Activated naive CD4-positive, alpha-beta T cell treated with anti-CD3 and anti-CD28 coated beads, Interleukin-2, amount 10 ng/mL, durations not matched to agents 7 days and 5 days (primary cell): ENCODE measurements at regions of chr9 and their contacts with region 1.

Region 1: GRCh38 chr9:127916665-127917613 is at the start of gene ST6GALNAC4:
- DNase-seq: peak; percentile 97
- H3K4me3 Mint-ChIP-seq: peak within 1 kb of the TSS; percentile 73
- H3K27ac Mint-ChIP-seq: peak within 1 kb of the TSS; percentile 88
- H3K4me1 Mint-ChIP-seq: peaks cover 77% of the 10 kb centered on the region
- H3K27me3 Mint-ChIP-seq: peaks cover 13% of the 10 kb centered on the region

Region 2: DNA sequence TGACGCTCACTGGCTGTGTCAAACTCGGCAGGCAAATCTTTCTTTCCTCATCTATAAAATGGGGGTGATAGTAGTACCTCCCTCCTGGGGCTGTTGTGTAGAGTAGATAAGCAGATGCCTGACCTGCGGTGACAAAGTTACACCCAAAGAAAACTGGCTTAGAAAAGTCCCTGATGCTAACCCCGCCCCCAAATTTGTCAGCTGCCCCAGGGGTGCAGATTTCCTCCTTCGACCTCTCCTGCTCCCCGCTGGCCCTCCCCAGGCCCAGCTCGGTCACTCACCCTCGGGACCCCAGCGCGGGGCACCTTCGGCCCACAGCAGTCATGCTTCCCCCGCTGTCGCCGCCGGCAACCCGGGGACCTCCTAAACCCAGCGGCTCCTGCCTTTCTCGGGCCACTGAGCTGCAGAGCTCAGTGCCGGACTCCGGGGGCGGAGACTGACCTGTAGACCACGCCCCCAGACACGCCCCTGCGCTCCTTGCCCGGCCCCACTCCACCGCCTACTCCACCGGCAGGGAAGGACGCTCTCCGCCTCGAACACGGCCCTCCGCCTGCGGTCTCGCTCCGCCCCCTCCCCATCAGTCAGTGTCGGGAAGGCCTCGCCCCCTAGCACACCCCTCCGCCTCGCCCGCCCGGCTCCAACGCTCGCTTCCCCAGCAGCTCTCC is 145.9 kb before region 1 on chr9:
- CTCF ChIA-PET with region 1: interaction called, 11 read pairs
- DNase-seq: peak; percentile 99
- H3K4me3 Mint-ChIP-seq: peak overlapping the region; percentile 80
- H3K27ac Mint-ChIP-seq: peak overlapping the region; percentile 93
- H3K4me1 Mint-ChIP-seq: peaks cover 85% of the 10 kb centered on the region
- H3K27me3 Mint-ChIP-seq: no peaks in the 10 kb centered on the region

Region 3: DNA sequence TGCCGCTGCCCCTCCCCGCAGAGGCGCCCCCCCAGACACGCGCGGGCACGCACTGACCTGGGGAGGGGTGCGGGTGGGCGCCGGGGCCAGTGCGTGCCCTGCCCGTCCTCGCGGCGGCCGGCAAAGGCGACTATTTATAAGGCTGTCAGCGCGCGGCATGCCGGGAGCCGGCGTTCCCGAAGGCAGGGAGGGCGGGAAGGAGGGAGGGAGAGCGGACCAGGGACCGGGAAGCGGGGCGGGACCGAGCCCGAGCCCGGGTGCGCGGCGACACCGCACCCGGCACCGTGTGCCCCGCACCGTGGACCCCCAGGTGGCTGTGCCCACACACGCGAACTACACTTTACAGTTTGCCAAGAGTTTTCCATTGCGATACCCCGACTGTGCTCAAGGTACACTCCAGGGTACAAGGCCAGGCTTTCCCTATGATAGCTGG is 39.4 kb before region 1 on chr9 and contains the start of gene AK1:
- CTCF ChIA-PET with region 1: interaction called, 12 read pairs
- DNase-seq: no peak
- H3K4me3 Mint-ChIP-seq: no peak within 1 kb of the TSS
- H3K27ac Mint-ChIP-seq: peak within 1 kb of the TSS; percentile 52
- H3K4me1 Mint-ChIP-seq: peaks cover 9% of the 10 kb centered on the region
- H3K27me3 Mint-ChIP-seq: peaks cover 16% of the 10 kb centered on the region

Region 4: DNA sequence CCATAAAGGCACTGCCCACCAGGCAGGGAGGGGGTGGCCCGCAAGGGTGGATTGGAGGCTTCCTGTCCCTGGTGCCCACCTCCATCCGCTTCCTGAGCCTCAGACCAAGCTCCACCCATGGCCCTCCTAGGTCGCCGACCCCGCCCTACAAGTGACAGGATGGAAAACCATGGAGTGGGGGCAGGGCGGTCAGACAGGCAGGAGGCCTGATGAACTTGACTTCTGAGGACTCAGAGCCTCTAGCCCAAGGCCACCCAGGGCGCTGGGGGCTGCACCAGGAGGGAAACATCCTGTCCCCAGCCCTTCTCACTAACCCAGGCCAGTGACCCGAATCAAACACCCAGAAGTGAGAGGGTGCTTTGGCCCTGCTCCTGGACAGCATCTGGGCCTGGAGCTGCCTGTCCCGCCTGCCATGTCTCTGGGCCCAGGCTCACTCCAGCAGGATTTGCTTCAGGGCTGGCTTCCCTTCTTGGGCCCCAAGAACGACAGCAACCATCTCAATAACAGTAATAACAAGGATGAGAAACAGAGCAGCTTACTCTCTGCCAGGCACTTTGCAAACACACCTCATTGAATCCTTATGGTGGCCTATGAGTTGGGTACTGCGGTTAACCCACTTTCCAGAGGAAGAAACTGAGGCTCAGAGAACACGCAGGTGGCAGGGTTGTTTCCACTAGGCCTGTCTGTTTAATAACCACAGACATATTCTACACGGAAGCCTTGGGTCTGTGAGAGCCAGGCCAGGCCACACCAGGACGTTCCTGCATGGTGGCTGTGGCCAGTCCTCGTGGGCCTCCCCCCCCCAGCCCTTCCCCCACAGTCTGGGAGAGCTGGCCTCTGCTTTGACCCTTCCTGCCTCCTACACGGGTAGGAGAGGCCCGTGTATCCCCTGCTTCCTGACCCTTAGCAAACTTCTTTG is 13.1 kb before region 1 on chr9:
- CTCF ChIA-PET with region 1: interaction called, 21 read pairs
- DNase-seq: peak; percentile 90
- H3K4me3 Mint-ChIP-seq: peak overlapping the region; percentile 92
- H3K27ac Mint-ChIP-seq: peak overlapping the region; percentile 99
- H3K4me1 Mint-ChIP-seq: peaks cover 56% of the 10 kb centered on the region
- H3K27me3 Mint-ChIP-seq: no peaks in the 10 kb centered on the region